ENCODE measurements at regions of chr3 and their contacts with region 1.

Region 1: DNA sequence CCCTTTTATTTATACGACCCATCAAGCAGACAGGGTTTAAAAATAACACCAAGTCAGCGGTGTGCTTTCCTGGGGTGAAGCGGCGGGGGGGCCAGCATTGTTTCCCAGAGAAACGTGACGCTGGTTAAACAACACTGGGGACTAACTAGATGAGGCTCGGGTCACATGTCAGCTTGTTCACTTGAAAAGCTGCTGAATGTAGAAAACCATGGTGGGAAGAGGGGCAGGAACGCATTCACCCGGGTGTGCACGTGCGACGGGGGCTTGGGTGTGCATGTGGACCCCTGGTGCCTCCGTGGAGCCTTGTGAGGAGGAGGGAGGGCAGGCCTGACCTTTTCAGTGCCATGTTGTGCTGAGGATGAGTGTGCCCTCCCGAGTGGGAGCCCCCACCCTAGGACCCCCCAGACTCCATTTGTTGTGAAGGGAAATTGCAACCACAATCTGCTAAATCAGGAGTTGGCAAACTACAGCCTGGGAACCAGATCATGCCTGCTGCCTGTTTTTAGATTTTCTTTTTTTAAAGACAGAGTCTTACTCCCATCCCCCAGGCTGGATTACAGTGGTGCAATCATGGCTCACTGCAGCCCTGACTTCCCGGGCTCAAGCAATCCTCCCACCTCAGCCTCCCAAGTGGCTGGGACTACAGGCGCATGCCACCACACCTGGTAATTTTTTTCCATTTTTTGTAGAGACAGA is 70.4 kb upstream of the CMTM7 start:
- DNase-seq: no peak

Region 2: GRCh38 chr3:32177702-32178198 is 143.5 kb before region 1 on chr3:
- intact Hi-C with region 1: loop called in 1 of 2 experiments (anchors 10 kb)
- DNase-seq: no peak

Region 3: DNA sequence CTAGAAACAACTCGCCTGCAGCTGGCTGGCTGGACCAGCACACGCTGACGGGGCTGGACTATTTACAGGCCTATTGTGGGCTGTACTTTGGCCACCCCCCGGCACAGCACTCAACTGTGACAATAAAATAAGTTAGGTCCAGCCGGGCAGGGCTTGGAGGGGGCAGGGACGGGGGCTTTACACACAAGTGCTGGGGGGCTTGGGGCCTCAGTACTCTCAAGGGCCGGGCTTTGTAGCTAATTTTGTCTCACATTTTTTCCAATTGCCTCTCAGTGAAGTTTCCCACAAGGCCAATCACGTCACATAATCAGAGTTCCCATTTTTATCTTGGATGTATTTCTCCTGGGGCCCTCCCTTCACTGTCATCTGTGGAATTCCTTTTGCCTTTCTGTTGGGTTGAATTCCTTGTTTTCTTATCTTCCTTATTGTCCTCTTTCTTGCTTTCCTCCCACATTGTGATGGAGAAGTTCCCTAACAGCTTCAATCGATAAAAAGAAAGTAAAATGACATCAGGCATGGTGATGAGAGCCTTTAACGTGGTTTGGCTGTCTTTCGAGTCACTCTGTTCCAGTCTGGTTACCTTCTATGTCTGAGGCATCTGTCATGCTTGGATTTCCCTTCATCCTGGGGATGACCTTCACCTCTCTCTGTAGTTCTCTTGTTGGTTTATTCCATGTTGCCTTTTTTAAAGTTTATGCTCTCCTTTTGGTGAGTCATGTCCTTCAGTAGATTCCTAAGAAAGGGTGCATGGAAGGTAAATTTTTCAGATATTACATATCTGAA is 26.3 kb after region 1 on chr3:
- intact Hi-C with region 1: no loop called
- DNase-seq: no peak

Region 4: DNA sequence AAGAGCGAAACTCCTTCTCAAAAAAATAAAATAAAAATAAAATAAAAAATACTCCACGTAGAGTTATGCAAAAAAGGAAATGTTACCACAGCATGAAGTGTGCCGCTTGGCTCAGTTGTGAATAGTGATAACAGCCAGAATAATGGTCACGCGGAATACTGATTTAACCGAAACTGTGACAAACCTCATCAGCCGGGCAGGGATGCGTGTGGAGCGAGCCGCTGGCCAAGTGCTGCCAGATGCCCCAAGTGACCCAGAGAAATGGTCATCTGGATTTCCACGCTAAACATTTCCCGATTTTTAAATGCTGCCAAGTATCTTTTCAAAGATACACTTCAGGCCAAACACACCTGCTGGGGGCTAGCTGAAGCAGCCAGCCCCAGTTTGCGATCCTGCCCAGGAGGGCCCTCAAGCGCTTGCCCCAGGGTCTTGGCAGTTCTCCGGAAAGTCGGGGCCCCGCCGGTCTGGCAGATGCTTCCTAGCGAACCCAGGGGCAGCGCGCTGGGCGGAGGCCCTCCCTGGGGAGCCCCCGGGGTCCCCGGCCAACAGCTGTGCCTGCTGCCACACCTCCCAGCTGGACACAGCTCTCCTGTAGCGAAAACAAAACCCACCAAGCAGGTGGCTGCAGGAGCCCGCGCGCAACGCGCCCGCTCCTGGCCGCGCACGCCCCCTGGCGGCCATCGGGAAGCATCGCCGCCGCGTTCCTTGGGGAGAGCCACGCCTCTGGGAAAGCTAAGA is 146.3 kb after region 1 on chr3:
- intact Hi-C with region 1: no loop called
- DNase-seq: peak; percentile 93